MCF 10A (cell line): ENCODE measurements at regions of chr3 and their contacts with region 1.

Region 1: DNA sequence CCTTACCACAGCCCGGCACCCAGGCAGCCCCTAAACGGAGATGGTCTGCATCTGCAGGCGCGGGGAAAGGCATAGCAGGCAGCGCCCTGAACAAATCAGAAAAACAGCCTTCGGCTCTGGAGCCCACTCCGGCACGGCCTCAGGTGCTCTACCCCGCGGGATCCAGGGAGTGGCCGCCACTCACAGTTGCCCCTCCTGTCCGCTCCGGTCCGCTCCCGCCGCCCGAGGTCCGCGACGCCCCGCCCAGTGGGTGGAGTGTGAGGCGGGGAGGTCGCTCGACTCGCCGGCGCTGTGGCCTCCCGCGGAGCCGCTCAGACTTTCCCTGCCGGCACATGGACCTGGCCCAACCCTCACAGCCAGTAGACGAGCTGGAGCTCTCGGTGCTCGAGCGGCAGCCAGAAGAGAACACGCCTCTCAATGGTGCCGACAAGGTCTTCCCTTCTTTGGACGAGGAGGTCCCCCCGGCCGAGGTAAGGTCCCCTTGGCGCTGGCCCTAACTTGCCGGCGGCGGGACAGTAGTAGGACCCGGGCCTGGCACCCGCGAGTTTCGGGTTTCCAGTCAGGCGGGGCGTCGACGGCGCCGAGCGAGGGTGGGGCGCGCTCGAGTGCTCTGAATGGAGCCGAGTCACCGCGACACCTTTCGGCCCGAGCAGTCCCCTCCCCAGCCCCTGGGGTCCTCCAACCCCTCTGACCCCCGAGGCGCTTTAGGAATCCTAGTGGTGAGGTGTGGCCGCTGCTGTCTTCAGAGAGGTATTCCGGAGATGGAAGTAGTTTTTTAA is at the start of gene C3orf52:
- DNase-seq: peak; percentile 87
- H3K4me3 Mint-ChIP-seq: peak within 1 kb of the TSS; percentile 90
- H3K27ac Mint-ChIP-seq: peak within 1 kb of the TSS; percentile 96
- H3K4me1 Mint-ChIP-seq: peaks cover 25% of the 10 kb centered on the region
- H3K27me3 Mint-ChIP-seq: no peaks in the 10 kb centered on the region
- CTCF ChIP-seq: no peak
- total RNA-seq, gene C3orf52: 10.4 and 16.1 TPM in 2 replicates

Region 2: GRCh38 chr3:111676211-111677006 is 409.9 kb before region 1 on chr3:
- CTCF ChIA-PET with region 1: no interaction called
- POLR2A ChIA-PET with region 1: no interaction called
- intact Hi-C with region 1: no loop called
- DNase-seq: peak; percentile 67
- H3K4me3 Mint-ChIP-seq: peak overlapping the region; percentile 78
- H3K27ac Mint-ChIP-seq: peak overlapping the region; percentile 86
- H3K4me1 Mint-ChIP-seq: peaks cover 29% of the 10 kb centered on the region
- H3K27me3 Mint-ChIP-seq: no peaks in the 10 kb centered on the region
- CTCF ChIP-seq: no peak

Region 3: DNA sequence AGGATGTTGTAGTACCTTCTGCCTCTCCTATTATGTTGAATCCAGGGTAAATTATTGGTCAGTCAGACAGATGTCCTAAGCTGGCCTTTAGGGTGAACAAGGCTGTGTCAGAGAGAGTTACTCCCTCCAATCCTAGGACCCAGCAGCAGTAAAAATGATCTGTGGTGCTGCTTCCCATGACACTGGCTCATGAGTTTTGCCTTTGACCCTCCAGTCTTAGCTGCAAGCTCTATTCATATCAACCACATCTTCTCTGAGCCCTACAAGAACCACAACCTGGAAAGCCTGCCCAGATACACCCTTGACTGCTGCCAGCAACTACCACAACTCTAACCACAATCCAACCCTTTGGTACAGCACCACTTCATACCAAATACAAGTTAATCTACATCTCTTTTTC is 254.4 kb before region 1 on chr3:
- CTCF ChIA-PET with region 1: no interaction called
- POLR2A ChIA-PET with region 1: no interaction called
- intact Hi-C with region 1: no loop called
- DNase-seq: no peak
- H3K4me3 Mint-ChIP-seq: no peak overlapping the region
- H3K27ac Mint-ChIP-seq: no peak overlapping the region
- H3K4me1 Mint-ChIP-seq: peaks cover 9% of the 10 kb centered on the region
- H3K27me3 Mint-ChIP-seq: no peaks in the 10 kb centered on the region
- CTCF ChIP-seq: no peak

Region 4: DNA sequence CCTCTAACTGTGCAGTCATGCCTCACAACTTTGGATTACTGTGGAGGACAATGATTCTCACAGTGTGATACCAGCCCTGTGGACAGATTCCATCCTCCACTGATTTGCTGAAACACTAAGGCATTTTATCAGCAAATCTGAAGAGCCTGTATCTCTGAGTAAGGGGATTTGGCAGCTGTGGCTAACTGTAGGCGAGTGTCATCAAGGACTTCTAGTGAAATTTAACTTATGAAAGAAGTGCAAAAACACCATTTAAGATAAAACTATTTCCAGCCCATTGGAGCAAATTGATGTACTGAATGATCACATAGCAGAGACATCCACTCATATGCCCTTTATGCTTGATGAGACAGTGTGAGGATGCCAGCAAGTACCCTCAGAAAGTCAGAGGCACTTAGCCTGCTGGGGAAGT is 65.6 kb before region 1 on chr3:
- CTCF ChIA-PET with region 1: no interaction called
- POLR2A ChIA-PET with region 1: no interaction called
- intact Hi-C with region 1: no loop called
- DNase-seq: no peak
- H3K4me3 Mint-ChIP-seq: no peak overlapping the region
- H3K27ac Mint-ChIP-seq: no peak overlapping the region
- H3K4me1 Mint-ChIP-seq: no peaks in the 10 kb centered on the region
- H3K27me3 Mint-ChIP-seq: no peaks in the 10 kb centered on the region
- CTCF ChIP-seq: no peak

Region 5: DNA sequence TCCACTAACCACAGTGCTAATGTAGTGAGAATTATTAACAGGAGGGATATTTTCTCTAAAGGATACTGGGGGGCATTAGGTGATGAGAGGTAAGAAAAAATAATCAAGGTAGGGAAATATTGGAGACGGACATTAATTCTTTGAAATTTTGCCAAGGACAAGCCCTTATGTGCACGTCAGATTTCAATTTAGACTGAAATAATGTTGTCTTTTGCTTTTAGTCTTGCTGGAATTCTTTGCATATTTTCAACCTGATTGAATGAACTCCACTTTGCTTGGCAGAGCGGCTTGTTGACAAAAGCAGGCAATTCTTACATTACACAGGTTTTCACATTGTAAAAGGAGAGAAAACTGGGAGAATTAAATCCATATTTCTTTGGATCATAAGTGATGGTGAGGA is 25.1 kb before region 1 on chr3:
- CTCF ChIA-PET with region 1: no interaction called
- POLR2A ChIA-PET with region 1: no interaction called
- intact Hi-C with region 1: no loop called
- DNase-seq: no peak
- H3K4me3 Mint-ChIP-seq: no peak overlapping the region
- H3K27ac Mint-ChIP-seq: peak overlapping the region; percentile 54
- H3K4me1 Mint-ChIP-seq: peaks cover 11% of the 10 kb centered on the region
- H3K27me3 Mint-ChIP-seq: no peaks in the 10 kb centered on the region
- CTCF ChIP-seq: no peak

Region 6: DNA sequence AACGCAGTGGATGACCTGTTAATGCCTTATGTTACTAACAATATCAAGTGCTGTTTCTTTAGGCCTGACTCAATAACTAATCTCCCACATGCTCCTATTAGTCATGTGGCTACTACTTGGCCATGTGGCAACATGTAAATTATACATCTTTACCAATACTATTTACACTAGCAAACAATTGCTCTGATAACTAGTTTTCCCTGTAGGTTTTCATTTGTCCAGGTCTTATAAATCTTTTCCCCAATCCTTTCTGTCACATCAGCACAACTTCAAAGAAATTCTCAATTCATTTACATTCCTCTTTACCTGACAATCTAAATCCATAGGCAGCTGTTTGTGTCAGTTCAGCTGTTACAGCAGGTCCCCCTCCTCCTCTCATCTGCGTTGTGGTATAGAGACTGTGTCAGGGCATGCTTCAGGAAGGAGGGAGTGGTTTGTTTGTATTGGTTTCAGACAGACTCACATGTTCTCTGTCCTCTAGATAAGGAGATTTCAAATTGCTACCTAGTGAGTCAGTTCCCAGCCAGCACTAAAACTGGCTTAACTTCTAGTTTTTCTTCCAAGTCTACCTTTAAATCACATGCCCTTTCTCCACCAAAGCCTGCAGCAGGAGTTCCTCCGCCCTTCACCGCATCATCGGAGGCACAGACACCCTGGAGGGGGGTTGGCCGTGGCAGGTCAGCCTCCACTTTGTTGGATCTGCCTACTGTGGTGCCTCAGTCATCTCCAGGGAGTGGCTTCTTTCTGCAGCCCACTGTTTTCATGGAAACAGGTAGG is 11.4 kb before region 1 on chr3:
- CTCF ChIA-PET with region 1: no interaction called
- POLR2A ChIA-PET with region 1: interaction called, 11 read pairs
- intact Hi-C with region 1: loop called (anchors 1 kb)
- DNase-seq: peak; percentile 94
- H3K4me3 Mint-ChIP-seq: peak overlapping the region; percentile 68
- H3K27ac Mint-ChIP-seq: peak overlapping the region; percentile 97
- H3K4me1 Mint-ChIP-seq: peaks cover 25% of the 10 kb centered on the region
- H3K27me3 Mint-ChIP-seq: no peaks in the 10 kb centered on the region
- CTCF ChIP-seq: no peak

Region 7: GRCh38 chr3:112097378-112097777 is 11.1 kb after region 1 on chr3:
- CTCF ChIA-PET with region 1: no interaction called
- POLR2A ChIA-PET with region 1: interaction called, 10 read pairs
- intact Hi-C with region 1: no loop called
- DNase-seq: peak; percentile 99
- H3K4me3 Mint-ChIP-seq: peak overlapping the region; percentile 24
- H3K27ac Mint-ChIP-seq: peak overlapping the region; percentile 88
- H3K4me1 Mint-ChIP-seq: peaks cover 42% of the 10 kb centered on the region
- H3K27me3 Mint-ChIP-seq: no peaks in the 10 kb centered on the region
- CTCF ChIP-seq: no peak